ENCODE measurements at regions of chrX and their contacts with region 1.

Region 1: GRCh38 chrX:16797358-16797757 is 11.1 kb downstream of the TXLNG start:
- DNase-seq: no peak
- H3K4me3 ChIP-seq: no peak overlapping the region
- H3K27ac ChIP-seq: no peak overlapping the region
- H3K4me1 ChIP-seq: no peaks in the 10 kb centered on the region
- H3K27me3 ChIP-seq: no peaks in the 10 kb centered on the region
- CTCF ChIP-seq: no peak

Region 2: GRCh38 chrX:18010238-18010637 is 1212.9 kb after region 1 on chrX:
- CTCF ChIA-PET with region 1: no interaction called
- POLR2A ChIA-PET with region 1: interaction called, 11 read pairs
- intact Hi-C with region 1: no loop called
- DNase-seq: no peak
- H3K4me3 ChIP-seq: no peak overlapping the region
- H3K27ac ChIP-seq: no peak overlapping the region
- H3K4me1 ChIP-seq: no peaks in the 10 kb centered on the region
- H3K27me3 ChIP-seq: no peaks in the 10 kb centered on the region
- CTCF ChIP-seq: no peak

Measured in PC-9 (cell line).